PC-9 (cell line): ENCODE measurements at regions of chr5 and their contacts with region 1.

Region 1: GRCh38 chr5:149834246-149834855 is 104.2 kb downstream of the PPARGC1B start:
- DNase-seq: peak; percentile 54 to 66
- H3K4me3 ChIP-seq: no peak overlapping the region
- H3K27ac ChIP-seq: no peak overlapping the region
- H3K4me1 ChIP-seq: peaks cover 8% of the 10 kb centered on the region
- H3K27me3 ChIP-seq: no peaks in the 10 kb centered on the region
- CTCF ChIP-seq: peak; percentile 82

Region 2: DNA sequence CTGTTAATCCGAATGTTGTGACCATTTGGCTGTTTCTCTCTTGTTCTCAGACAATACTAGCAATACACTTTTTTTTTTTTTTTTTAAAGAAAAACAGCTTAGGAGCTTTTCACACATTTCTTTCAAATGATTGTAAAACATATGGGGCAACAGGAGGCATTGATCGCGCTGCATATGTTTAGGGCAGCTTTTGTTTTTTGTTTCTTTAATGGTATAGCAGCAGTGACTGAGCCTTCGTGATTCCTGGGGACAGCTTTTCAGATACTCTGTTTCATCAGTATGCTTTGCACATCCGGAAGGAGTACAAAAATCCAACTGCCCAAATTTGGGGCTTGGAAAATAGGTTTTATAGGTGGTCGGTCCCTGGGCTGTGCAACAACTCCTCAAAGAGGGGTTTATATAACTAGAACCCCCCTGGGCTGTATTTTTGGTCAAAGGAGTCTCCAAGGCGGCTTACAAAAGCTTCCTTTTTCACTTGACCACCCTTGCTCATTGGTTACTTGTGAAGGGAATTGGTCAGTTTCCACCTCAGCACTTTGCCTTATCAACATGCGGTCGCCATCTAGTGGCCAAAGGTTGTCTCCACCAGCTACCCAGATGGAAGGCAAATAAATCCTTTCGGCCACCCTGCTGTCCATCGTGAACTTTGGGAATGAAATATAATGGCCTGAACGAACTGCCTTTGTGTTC is 18.4 kb after region 1 on chr5:
- CTCF ChIA-PET with region 1: interaction called, 27 read pairs
- POLR2A ChIA-PET with region 1: no interaction called
- intact Hi-C with region 1: no loop called
- DNase-seq: peak; percentile 50 to 71
- H3K4me3 ChIP-seq: no peak overlapping the region
- H3K27ac ChIP-seq: no peak overlapping the region
- H3K4me1 ChIP-seq: no peaks in the 10 kb centered on the region
- H3K27me3 ChIP-seq: no peaks in the 10 kb centered on the region
- CTCF ChIP-seq: peak; percentile 89

Region 3: DNA sequence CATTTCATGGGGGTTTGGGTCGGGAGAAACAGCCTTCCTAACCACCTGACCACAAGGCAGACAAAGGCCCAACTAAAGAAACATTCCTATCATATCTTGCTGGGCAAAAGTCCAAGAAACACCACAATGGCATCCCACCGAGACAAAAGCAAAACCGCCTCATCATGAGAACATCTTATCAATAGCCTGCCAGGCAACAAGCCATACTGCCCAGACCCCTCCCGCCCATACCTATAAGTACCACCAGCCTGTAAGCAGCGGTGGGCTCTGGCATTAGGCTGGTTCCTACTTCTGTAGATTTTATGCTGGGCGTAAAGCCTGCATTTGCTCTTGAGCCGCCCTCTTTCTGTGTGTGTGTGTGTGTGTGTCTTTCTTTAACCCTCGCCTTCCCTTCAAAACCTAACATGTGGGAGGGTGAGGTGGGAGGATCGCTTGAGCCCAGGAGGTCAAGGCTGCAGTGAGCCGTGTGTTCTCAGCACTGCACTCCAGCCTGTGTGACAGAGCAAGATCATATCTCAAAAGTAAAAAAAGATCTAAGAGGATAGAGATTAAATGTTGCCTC is 53.4 kb after region 1 on chr5:
- CTCF ChIA-PET with region 1: no interaction called
- POLR2A ChIA-PET with region 1: no interaction called
- intact Hi-C with region 1: no loop called
- DNase-seq: peak; percentile 58 to 68
- H3K4me3 ChIP-seq: no peak overlapping the region
- H3K27ac ChIP-seq: no peak overlapping the region
- H3K4me1 ChIP-seq: peaks cover 3% of the 10 kb centered on the region; the same call in 1 of the 2 replicates
- H3K27me3 ChIP-seq: no peaks in the 10 kb centered on the region
- CTCF ChIP-seq: no peak

Region 4: GRCh38 chr5:150122158-150122510 is 287.8 kb after region 1 on chr5:
- CTCF ChIA-PET with region 1: interaction called, 3 read pairs
- POLR2A ChIA-PET with region 1: no interaction called
- intact Hi-C with region 1: loop called (anchors 1 kb)
- DNase-seq: peak in 1 of 2 experiments; percentile 57
- H3K4me3 ChIP-seq: no peak overlapping the region
- H3K27ac ChIP-seq: no peak overlapping the region
- H3K4me1 ChIP-seq: peaks cover 7% of the 10 kb centered on the region
- H3K27me3 ChIP-seq: no peaks in the 10 kb centered on the region
- CTCF ChIP-seq: peak; percentile 68

Region 5: GRCh38 chr5:150161242-150162141 is 327.1 kb after region 1 on chr5:
- CTCF ChIA-PET with region 1: no interaction called
- POLR2A ChIA-PET with region 1: no interaction called
- intact Hi-C with region 1: loop called (anchors 1 kb)
- DNase-seq: peak; percentile 51 to 91
- H3K4me3 ChIP-seq: peak overlapping the region; percentile 18; the same call in 1 of the 2 replicates
- H3K27ac ChIP-seq: no peak overlapping the region
- H3K4me1 ChIP-seq: no peaks in the 10 kb centered on the region; the same call in 1 of the 2 replicates
- H3K27me3 ChIP-seq: no peaks in the 10 kb centered on the region
- CTCF ChIP-seq: peak; percentile 96

Region 6: GRCh38 chr5:150357326-150358260 is 523.2 kb after region 1 on chr5 and contains the start of gene TCOF1:
- CTCF ChIA-PET with region 1: no interaction called
- POLR2A ChIA-PET with region 1: no interaction called
- intact Hi-C with region 1: loop called (anchors 10 kb)
- DNase-seq: peak; percentile 84 to 99
- H3K4me3 ChIP-seq: peak within 1 kb of the TSS; percentile 92
- H3K27ac ChIP-seq: peak within 1 kb of the TSS; percentile 45
- H3K4me1 ChIP-seq: peaks cover 13% of the 10 kb centered on the region
- H3K27me3 ChIP-seq: no peaks in the 10 kb centered on the region
- CTCF ChIP-seq: no peak
- total RNA-seq, gene TCOF1: 68.4 and 75.3 TPM in 2 replicates